Caco-2 (cell line): ENCODE measurements at regions of chr10 and their contacts with region 1.

Region 1: DNA sequence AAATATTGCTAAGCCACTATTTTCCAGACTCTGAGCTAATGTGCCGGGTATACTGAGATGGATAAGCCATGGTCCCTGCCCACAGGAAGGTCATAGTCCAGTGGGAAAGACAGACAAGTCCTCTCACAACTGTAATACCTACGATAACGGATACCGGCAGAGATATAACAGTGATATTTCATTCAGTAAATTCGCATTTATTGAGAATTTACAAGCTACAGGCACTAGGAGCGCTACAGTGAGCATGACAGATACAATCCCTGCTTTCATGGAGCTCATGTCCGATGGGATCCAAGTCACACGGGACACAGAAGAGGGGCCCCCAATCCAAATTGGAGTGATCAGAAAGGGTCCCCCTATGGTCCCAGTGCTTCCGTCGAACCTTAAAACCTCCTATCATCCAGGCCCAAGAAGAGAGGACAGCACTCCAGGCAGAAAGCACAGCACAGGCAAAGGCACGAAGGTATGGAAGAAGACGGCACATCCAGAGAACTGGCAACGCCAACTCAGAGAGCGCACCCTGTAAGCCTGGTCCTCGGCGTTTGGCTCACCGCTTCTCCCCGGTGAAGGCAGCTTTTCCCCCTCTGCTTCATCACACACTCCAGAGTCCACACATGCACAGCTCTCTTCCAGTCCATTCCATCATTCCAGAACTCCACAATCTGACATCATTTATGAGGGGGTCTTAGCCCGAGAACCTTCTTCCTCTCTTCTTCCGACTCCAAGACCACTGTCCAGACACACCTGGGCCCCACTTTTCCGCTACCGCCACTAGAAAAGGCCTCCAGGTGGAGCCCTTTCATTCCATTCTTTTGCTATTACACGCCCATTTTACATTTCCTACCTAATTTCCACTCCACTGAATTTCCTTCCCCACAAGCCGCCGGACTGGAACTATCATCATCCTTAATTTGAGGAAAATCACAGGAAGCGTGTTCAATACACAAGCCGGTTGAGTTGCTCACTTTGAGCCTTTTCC is 47.9 kb upstream of the NKX2-3 start:
- DNase-seq: peak; percentile 43 to 58
- H3K4me3 ChIP-seq: no peak overlapping the region
- H3K4me3 Mint-ChIP-seq: no peak overlapping the region
- H3K27ac Mint-ChIP-seq: no peak overlapping the region
- H3K4me1 ChIP-seq: no peaks in the 10 kb centered on the region
- H3K4me1 Mint-ChIP-seq: peaks cover 7% of the 10 kb centered on the region
- H3K27me3 ChIP-seq: no peaks in the 10 kb centered on the region; the same call in 1 of the 2 replicates
- H3K27me3 Mint-ChIP-seq: peaks cover 20% of the 10 kb centered on the region
- CTCF ChIP-seq: peak; percentile 74 to 83

Region 2: DNA sequence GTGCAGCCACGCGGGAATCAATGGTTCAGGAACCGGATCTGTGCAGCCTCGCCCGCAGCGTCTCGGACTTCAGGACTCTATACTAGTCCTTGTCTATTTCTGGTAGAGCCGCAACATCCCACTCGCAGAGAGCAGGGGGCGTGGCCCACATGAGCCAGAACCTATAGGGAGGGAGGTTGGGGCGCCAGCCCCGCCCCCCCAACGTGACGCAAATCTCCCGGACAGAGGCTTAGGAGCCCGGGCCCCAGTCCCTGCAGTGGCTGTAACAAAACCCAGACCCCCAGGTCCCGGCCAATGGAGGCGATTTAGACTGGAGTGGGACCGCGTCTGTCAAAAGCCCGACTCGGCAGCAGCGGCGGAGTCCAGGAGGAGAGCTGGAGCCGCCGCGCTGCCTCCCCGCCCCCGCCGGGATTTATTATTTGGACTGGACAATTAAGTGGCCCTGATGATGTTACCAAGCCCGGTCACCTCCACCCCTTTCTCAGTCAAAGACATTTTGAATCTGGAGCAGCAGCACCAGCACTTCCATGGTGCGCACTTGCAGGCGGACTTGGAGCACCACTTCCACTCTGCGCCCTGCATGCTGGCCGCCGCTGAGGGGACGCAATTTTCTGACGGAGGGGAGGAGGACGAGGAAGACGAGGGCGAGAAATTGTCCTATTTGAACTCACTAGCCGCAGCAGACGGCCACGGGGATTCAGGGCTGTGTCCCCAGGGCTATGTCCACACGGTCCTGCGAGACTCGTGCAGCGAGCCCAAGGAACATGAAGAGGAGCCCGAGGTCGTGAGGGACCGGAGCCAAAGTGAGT is 48.0 kb after region 1 on chr10 and contains the start of gene NKX2-3:
- CTCF ChIA-PET with region 1: interaction called, 10 read pairs
- POLR2A ChIA-PET with region 1: no interaction called
- intact Hi-C with region 1: no loop called
- DNase-seq: peak; percentile 87 to 88
- H3K4me3 ChIP-seq: peak within 1 kb of the TSS; percentile 37
- H3K4me3 Mint-ChIP-seq: peak within 1 kb of the TSS; percentile 74
- H3K27ac Mint-ChIP-seq: no peak within 1 kb of the TSS
- H3K4me1 ChIP-seq: peaks cover 17% of the 10 kb centered on the region; the same call in 1 of the 2 replicates
- H3K4me1 Mint-ChIP-seq: peaks cover 8% of the 10 kb centered on the region
- H3K27me3 ChIP-seq: no peaks in the 10 kb centered on the region
- H3K27me3 Mint-ChIP-seq: no peaks in the 10 kb centered on the region
- CTCF ChIP-seq: no peak
- total RNA-seq, gene NKX2-3: 0.37 and 0.43 TPM in 2 replicates

Region 3: GRCh38 chr10:99548041-99548530 is 63.2 kb after region 1 on chr10:
- CTCF ChIA-PET with region 1: interaction called, 11 read pairs
- POLR2A ChIA-PET with region 1: no interaction called
- intact Hi-C with region 1: loop called (anchors 1 kb)
- DNase-seq: peak in 1 of 2 experiments; percentile 53
- H3K4me3 ChIP-seq: no peak overlapping the region
- H3K4me3 Mint-ChIP-seq: no peak overlapping the region
- H3K27ac Mint-ChIP-seq: no peak overlapping the region
- H3K4me1 ChIP-seq: peaks cover 13% of the 10 kb centered on the region
- H3K4me1 Mint-ChIP-seq: peaks cover 7% of the 10 kb centered on the region
- H3K27me3 ChIP-seq: no peaks in the 10 kb centered on the region
- H3K27me3 Mint-ChIP-seq: no peaks in the 10 kb centered on the region
- CTCF ChIP-seq: peak; percentile 21 to 63

Region 4: GRCh38 chr10:99612167-99612831 is 127.4 kb after region 1 on chr10:
- CTCF ChIA-PET with region 1: no interaction called
- POLR2A ChIA-PET with region 1: no interaction called
- intact Hi-C with region 1: loop called (anchors 1 kb)
- DNase-seq: peak in 1 of 2 experiments; percentile 76
- H3K4me3 ChIP-seq: no peak overlapping the region
- H3K4me3 Mint-ChIP-seq: no peak overlapping the region
- H3K27ac Mint-ChIP-seq: no peak overlapping the region
- H3K4me1 ChIP-seq: no peaks in the 10 kb centered on the region
- H3K4me1 Mint-ChIP-seq: no peaks in the 10 kb centered on the region
- H3K27me3 ChIP-seq: no peaks in the 10 kb centered on the region
- H3K27me3 Mint-ChIP-seq: no peaks in the 10 kb centered on the region
- CTCF ChIP-seq: peak; percentile 77 to 81

Region 5: GRCh38 chr10:99711129-99711719 is 226.3 kb after region 1 on chr10:
- CTCF ChIA-PET with region 1: no interaction called
- POLR2A ChIA-PET with region 1: no interaction called
- intact Hi-C with region 1: no loop called
- DNase-seq: peak in 1 of 2 experiments; percentile 65
- H3K4me3 ChIP-seq: no peak overlapping the region
- H3K4me3 Mint-ChIP-seq: no peak overlapping the region
- H3K27ac Mint-ChIP-seq: no peak overlapping the region
- H3K4me1 ChIP-seq: no peaks in the 10 kb centered on the region
- H3K4me1 Mint-ChIP-seq: peaks cover 8% of the 10 kb centered on the region
- H3K27me3 ChIP-seq: no peaks in the 10 kb centered on the region
- H3K27me3 Mint-ChIP-seq: no peaks in the 10 kb centered on the region
- CTCF ChIP-seq: peak; percentile 41 to 73